ENCODE measurements at regions of chr17 and their contacts with region 1.

Region 1: GRCh38 chr17:10727192-10727976 is 2.4 kb downstream of the TMEM220 start:
- DNase-seq: no peak
- H3K4me3 Mint-ChIP-seq: no peak overlapping the region
- H3K27ac Mint-ChIP-seq: no peak overlapping the region
- H3K4me1 Mint-ChIP-seq: peaks cover 23% of the 10 kb centered on the region
- H3K27me3 Mint-ChIP-seq: peaks cover 9% of the 10 kb centered on the region

Region 2: DNA sequence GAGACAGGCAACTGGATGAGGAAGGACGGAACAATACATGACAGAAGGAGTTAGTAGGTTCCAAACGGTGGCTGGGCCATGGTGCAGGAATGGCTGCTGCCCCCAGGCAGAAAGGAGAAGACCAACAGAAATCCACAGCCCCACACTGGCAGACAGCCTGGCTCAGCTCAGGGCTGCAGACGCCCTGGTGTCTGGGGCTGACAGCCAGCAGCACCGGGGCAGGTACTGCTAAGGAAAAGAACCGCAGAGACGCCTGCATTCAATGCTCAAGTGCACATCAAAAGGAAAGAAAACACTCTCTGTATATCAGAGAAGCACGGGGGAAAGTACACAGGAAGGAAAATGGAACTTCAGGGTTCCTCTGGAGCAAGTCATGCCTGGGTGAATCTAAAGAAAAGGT is 582.4 kb before region 1 on chr17:
- intact Hi-C with region 1: no loop called
- DNase-seq: no peak
- H3K4me3 Mint-ChIP-seq: no peak overlapping the region
- H3K27ac Mint-ChIP-seq: no peak overlapping the region
- H3K4me1 Mint-ChIP-seq: peaks cover 6% of the 10 kb centered on the region
- H3K27me3 Mint-ChIP-seq: peaks cover 38% of the 10 kb centered on the region

Region 3: DNA sequence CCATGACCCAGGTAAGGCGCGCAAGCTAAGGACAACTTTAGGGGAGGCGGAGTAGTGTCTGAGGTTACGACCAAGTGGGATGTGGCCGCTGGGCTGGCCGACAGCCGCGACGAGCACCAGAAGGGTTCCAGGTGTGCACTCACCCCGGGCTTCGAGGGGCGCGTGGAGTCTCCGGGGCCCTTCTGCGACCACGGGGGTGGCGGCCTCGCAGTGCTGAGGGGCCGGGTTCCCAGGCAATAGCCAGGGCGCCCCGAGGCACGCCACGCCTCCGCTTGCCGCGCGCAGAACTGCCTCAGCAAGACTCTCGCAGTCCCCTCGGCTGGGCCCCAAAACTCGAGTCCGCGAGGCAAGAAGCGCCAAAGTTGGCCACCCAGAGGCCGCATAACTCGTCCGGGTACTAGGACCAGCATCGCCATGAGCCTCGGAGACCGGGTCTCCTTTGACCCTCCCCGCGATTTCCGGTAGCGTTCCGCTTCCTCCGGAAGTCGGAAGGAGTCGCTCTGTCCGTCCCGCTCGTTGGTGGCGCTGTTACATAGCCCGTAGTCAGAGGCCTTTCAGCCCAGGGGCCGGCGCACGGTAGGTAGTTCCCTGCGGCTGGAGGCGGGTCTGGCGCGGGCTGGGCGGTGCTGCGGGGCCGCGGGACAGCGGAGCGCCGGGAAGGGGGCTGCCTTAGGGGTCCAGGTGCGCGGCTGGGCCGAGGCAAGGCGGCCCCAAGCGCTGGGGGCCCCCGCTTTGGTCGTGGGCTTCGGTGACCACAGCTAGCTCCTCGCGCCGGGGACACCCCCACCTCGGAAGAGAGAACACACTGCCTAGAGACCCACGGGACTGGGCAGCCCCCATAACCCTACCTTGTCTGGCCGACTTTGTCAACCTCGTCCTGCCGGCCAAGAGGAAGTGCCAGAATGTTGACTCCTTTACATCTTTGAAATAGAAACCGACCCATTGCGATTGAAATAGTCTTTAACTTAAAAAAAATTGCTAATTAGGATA is 30.0 kb before region 1 on chr17 and contains the starts of genes ADPRM and SCO1:
- intact Hi-C with region 1: loop called (anchors 2 kb)
- DNase-seq: peak; percentile 88
- H3K4me3 Mint-ChIP-seq: peak within 1 kb of the TSS; percentile 95
- H3K27ac Mint-ChIP-seq: peak within 1 kb of the TSS; percentile 94
- H3K4me1 Mint-ChIP-seq: peaks cover 47% of the 10 kb centered on the region
- H3K27me3 Mint-ChIP-seq: no peaks in the 10 kb centered on the region
- total RNA-seq, gene ADPRM: 10.3 and 10.5 TPM in 2 replicates
- total RNA-seq, gene SCO1: 35.4 and 37.0 TPM in 2 replicates

Region 4: GRCh38 chr17:10754109-10754508 is 26.7 kb after region 1 on chr17:
- intact Hi-C with region 1: no loop called
- DNase-seq: no peak
- H3K4me3 Mint-ChIP-seq: no peak overlapping the region
- H3K27ac Mint-ChIP-seq: no peak overlapping the region
- H3K4me1 Mint-ChIP-seq: no peaks in the 10 kb centered on the region
- H3K27me3 Mint-ChIP-seq: no peaks in the 10 kb centered on the region

Measured in activated T-helper 2 cell treated with anti-CD3 and anti-CD28 coated beads, Interferon-gamma antibody, Interleukin-2, Interleukin-4, amounts not matched to agents 10 μg/mL and 5 μg/mL and 100 μg/mL, durations not matched to agents 14 hours and 24 hours and 36 hours (primary cell).